ENCODE measurements at regions of chr2 and their contacts with region 1.

Region 1: GRCh38 chr2:64330281-64331113 is 123.5 kb upstream of the LGALSL start:
- DNase-seq: peak; percentile 91
- H3K4me3 ChIP-seq: peak overlapping the region; percentile 75
- H3K27ac ChIP-seq: peak overlapping the region; percentile 62
- H3K4me1 ChIP-seq: peaks cover 12% of the 10 kb centered on the region
- H3K27me3 ChIP-seq: no peaks in the 10 kb centered on the region

Region 2: DNA sequence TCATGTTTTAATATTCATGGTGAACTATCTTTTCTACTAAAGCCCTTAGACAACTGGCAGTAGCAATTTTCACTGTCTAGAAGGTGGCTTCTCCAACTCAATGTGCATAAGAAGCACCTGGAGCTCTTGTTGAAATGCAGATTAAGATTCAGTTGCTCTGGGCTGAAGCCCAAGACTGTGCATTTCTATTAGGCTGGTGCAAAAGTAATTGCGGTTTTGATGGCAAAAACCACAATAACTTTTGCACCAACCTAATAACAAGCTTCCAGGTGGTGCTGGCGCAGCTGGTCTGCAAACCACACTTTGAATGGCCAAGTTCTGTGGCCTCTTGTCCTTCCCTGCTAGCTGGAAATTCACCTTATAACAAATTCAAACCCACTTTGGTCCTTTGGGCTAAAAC is 284.6 kb before region 1 on chr2:
- in situ Hi-C with region 1: loop called (anchors 5 kb)
- DNase-seq: no peak
- H3K4me3 ChIP-seq: no peak overlapping the region
- H3K27ac ChIP-seq: no peak overlapping the region
- H3K4me1 ChIP-seq: no peaks in the 10 kb centered on the region
- H3K27me3 ChIP-seq: no peaks in the 10 kb centered on the region

Region 3: GRCh38 chr2:64488050-64488974 is 157.8 kb after region 1 on chr2:
- in situ Hi-C with region 1: loop called (anchors 10 kb)
- DNase-seq: peak; percentile 59
- H3K4me3 ChIP-seq: no peak overlapping the region
- H3K27ac ChIP-seq: no peak overlapping the region
- H3K4me1 ChIP-seq: no peaks in the 10 kb centered on the region
- H3K27me3 ChIP-seq: peaks cover 29% of the 10 kb centered on the region

Region 4: DNA sequence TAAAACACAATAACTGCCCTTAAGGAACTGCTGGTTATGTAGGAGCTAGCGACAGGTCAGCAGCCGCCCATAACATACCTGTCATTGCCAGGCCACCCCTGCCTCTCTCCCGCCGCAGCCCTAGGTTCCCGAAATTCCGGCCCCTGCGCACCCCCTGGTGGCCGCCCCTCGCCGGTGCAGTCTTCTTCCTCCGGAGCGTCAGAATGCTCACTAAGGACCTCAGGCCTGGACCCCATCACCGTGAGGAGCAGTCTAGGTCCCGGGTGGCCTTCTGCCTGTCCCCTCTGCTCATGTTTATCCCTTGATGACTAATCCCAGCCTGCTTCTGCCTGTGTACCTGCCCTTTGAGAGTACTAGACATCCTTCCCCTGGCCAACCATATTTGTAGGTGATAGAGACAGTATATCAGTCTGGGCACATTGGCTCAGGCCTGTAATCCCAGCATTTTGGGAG is 543.0 kb after region 1 on chr2:
- in situ Hi-C with region 1: loop called (anchors 25 kb)
- DNase-seq: peak; percentile 74
- H3K4me3 ChIP-seq: peak overlapping the region; percentile 38
- H3K27ac ChIP-seq: no peak overlapping the region
- H3K4me1 ChIP-seq: peaks cover 15% of the 10 kb centered on the region
- H3K27me3 ChIP-seq: 0 out of 2 replicates have a peak, but pooled peaks cover 3% of the 10 kb centered on the region

Region 5: DNA sequence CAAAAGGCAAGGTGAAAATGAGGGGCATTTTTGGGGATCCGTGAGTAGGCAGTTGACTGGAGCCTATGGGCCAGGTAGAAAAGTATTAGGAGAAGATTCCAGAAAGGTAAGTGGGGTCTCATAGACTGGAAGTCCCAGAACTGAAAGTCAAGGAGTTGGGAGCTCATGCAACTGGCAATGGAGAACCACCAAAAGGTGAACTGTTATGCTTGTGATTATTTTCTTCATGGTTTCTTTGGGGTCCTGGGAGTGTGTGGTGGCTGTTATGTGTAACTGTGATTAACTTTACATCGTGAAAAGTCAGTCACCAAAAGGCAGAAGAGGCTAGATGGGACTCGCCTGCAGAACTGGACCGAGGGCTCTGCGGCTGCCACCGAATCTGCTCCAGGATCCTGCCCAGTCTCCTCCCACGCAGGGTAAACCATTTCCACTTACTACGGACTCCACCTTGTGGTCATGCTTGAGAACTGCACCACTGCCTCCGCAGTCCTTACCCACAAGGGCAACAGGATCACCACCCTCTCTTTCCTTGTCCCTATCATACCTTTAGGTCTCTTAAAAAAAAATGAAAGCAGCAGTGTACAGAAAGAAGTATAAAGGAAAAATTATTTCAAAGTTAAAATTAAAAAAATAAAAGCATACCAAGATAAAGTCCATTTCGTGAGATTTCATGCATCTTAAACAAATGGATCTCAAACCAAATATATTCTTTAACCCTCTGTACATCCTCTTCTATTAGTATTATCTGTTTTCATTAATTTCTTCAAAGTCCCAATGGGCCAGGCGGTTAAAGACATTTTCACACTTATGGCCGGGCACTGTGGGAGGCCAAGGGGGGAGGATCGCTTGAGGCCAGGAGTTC is 710.1 kb after region 1 on chr2:
- in situ Hi-C with region 1: loop called (anchors 25 kb)
- DNase-seq: peak; percentile 93
- H3K4me3 ChIP-seq: peak overlapping the region; percentile 62
- H3K27ac ChIP-seq: no peak overlapping the region
- H3K4me1 ChIP-seq: no peaks in the 10 kb centered on the region
- H3K27me3 ChIP-seq: no peaks in the 10 kb centered on the region